ENCODE measurements at regions of chr18 and their contacts with region 1.

Region 1: GRCh38 chr18:30361864-30362540 is 680.5 kb downstream of the DSC3 start:
- DNase-seq: no peak
- ATAC-seq: no peak
- H3K4me3 ChIP-seq: no peak overlapping the region
- H3K4me3 Mint-ChIP-seq: no peak overlapping the region
- H3K27ac ChIP-seq: no peak overlapping the region
- H3K27ac Mint-ChIP-seq: no peak overlapping the region
- H3K4me1 ChIP-seq: no peaks in the 10 kb centered on the region
- H3K4me1 Mint-ChIP-seq: no peaks in the 10 kb centered on the region
- H3K27me3 ChIP-seq: no peaks in the 10 kb centered on the region
- H3K27me3 Mint-ChIP-seq: no peaks in the 10 kb centered on the region
- CTCF ChIP-seq: no peak

Region 2: DNA sequence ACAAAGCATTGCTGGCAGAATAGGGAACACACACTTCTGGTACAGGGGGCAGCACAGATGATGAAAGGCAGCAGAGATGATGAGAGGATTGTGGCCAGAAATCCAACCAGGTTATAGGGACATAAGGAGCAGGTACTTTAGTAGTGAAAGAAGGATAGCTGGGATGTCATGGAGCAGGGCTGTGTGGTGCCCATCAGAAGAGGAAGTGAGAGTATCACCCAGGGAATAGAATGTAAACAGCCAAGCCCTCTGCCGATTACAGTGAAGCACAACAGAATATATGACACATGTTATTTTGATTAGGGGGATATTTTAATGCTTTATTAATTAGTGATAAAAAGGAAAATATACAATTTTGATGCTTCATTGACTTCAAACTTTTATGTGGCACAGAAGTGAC is 1301.7 kb before region 1 on chr18:
- CTCF ChIA-PET with region 1: no interaction called
- POLR2A ChIA-PET with region 1: no interaction called
- intact Hi-C with region 1: no loop called
- DNase-seq: no peak
- ATAC-seq: no peak
- H3K4me3 ChIP-seq: no peak overlapping the region
- H3K4me3 Mint-ChIP-seq: no peak overlapping the region
- H3K27ac ChIP-seq: no peak overlapping the region
- H3K27ac Mint-ChIP-seq: no peak overlapping the region
- H3K4me1 ChIP-seq: no peaks in the 10 kb centered on the region
- H3K4me1 Mint-ChIP-seq: no peaks in the 10 kb centered on the region
- H3K27me3 ChIP-seq: no peaks in the 10 kb centered on the region
- H3K27me3 Mint-ChIP-seq: no peaks in the 10 kb centered on the region
- CTCF ChIP-seq: no peak

Region 3: DNA sequence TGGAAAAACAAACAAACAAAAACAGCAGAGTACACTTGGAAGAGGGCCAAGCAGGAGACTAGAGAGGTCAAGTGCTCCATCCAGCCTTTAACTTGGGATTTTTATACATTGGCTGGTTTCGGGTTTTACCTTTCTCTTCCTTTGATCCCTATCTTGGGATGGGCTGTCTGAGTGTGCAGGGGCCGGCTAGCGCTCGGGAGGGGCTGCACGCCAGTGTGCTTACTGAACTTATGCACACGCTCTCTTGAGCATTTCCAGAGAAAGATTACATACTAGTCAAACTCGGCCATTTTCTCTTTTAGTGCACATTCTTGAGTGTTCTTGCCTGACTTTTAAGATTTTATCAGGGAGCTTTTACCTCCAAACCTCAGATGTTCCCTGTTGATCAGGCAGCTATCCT is 27.2 kb before region 1 on chr18:
- CTCF ChIA-PET with region 1: no interaction called
- POLR2A ChIA-PET with region 1: no interaction called
- intact Hi-C with region 1: loop called in 1 of 2 experiments (anchors 1 kb)
- DNase-seq: no peak
- ATAC-seq: no peak
- H3K4me3 ChIP-seq: no peak overlapping the region
- H3K4me3 Mint-ChIP-seq: no peak overlapping the region
- H3K27ac ChIP-seq: no peak overlapping the region
- H3K27ac Mint-ChIP-seq: no peak overlapping the region
- H3K4me1 ChIP-seq: no peaks in the 10 kb centered on the region
- H3K4me1 Mint-ChIP-seq: no peaks in the 10 kb centered on the region
- H3K27me3 ChIP-seq: no peaks in the 10 kb centered on the region
- H3K27me3 Mint-ChIP-seq: no peaks in the 10 kb centered on the region
- CTCF ChIP-seq: no peak